OCI-LY7 (cell line): ENCODE measurements at regions of chr15 and their contacts with region 1.

Region 1: GRCh38 chr15:61871926-61872522 is 188.2 kb downstream of the VPS13C start:
- DNase-seq: peak; percentile 24
- H3K4me3 ChIP-seq: no peak overlapping the region
- H3K27ac ChIP-seq: no peak overlapping the region
- H3K4me1 ChIP-seq: no peaks in the 10 kb centered on the region
- CTCF ChIP-seq: peak; percentile 92

Region 2: GRCh38 chr15:61644550-61644949 is 227.5 kb before region 1 on chr15:
- CTCF ChIA-PET with region 1: no interaction called
- POLR2A ChIA-PET with region 1: no interaction called
- intact Hi-C with region 1: no loop called
- DNase-seq: no peak
- H3K4me3 ChIP-seq: no peak overlapping the region
- H3K27ac ChIP-seq: no peak overlapping the region
- H3K4me1 ChIP-seq: no peaks in the 10 kb centered on the region
- CTCF ChIP-seq: no peak

Region 3: GRCh38 chr15:61750381-61751084 is 121.5 kb before region 1 on chr15:
- CTCF ChIA-PET with region 1: no interaction called
- POLR2A ChIA-PET with region 1: no interaction called
- intact Hi-C with region 1: no loop called
- DNase-seq: no peak
- H3K4me3 ChIP-seq: no peak overlapping the region
- H3K27ac ChIP-seq: no peak overlapping the region
- H3K4me1 ChIP-seq: no peaks in the 10 kb centered on the region
- CTCF ChIP-seq: no peak

Region 4: DNA sequence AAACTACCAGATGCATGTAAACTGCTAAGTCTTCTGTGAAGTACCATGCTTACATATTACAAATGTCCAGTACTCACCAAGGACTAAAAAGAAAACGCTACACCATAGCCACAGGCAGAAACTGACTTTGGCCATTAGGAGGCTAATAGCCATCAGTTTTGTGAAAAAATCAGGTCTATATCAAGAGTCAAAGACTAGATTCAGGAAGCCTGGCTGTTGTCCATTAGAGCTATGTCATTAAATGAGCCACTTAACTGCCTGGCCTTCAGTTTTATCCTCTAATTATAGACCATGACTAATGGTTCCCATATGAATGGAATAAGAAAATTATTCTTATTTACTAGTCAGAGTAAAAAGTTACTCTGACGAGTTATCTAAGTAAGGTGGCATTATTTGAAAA is 44.1 kb after region 1 on chr15:
- CTCF ChIA-PET with region 1: no interaction called
- POLR2A ChIA-PET with region 1: no interaction called
- intact Hi-C with region 1: no loop called
- DNase-seq: no peak
- H3K4me3 ChIP-seq: no peak overlapping the region
- H3K27ac ChIP-seq: no peak overlapping the region
- H3K4me1 ChIP-seq: no peaks in the 10 kb centered on the region
- CTCF ChIP-seq: no peak

Region 5: GRCh38 chr15:62026487-62027262 is 154.7 kb after region 1 on chr15:
- CTCF ChIA-PET with region 1: no interaction called
- POLR2A ChIA-PET with region 1: no interaction called
- intact Hi-C with region 1: no loop called
- DNase-seq: peak; percentile 14
- H3K4me3 ChIP-seq: no peak overlapping the region
- H3K27ac ChIP-seq: peak overlapping the region; percentile 13
- H3K4me1 ChIP-seq: peaks cover 16% of the 10 kb centered on the region
- CTCF ChIP-seq: no peak

Region 6: GRCh38 chr15:62071711-62072308 is 199.8 kb after region 1 on chr15:
- CTCF ChIA-PET with region 1: interaction called, 3 read pairs
- POLR2A ChIA-PET with region 1: no interaction called
- intact Hi-C with region 1: loop called (anchors 2 kb)
- DNase-seq: peak; percentile 59
- H3K4me3 ChIP-seq: no peak overlapping the region
- H3K27ac ChIP-seq: no peak overlapping the region
- H3K4me1 ChIP-seq: peaks cover 5% of the 10 kb centered on the region
- CTCF ChIP-seq: peak; percentile 91

Region 7: DNA sequence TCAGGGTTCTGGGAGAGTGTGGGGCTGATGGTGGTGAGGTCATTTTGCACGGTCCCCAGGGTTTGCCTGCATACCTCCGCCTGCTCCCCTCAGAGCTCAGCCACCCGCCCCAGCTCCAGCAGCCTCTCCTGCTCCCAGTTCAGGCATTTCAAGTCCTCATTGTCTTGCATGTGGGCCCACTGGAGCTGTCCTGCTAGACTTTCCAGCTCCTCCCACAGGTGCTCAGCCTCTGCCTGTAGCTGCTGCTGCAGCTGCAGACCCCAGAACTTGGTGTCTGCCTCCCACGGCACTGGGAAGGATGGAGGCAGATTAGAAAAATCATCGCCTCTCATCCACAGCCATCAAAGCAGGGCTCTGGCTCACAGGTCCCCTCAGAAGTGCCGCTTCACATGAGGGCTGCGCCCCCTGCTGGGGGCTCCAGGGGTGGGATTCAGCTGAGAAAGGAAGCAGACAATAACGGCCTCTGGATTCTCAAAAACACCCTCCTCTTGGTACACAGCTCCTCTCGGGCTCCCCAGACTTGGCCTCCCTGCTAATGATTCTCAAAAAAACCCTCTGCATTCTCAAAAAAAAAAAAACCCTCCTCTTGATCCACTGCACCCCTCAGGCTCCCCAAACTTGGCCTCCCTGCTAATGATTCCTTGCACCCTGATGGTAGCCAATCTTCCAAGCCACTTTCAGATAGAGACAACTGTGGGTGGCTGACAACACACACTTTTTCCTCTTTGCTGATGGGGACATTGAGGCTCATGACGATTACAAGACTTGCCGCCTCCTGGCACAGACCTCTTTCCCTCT is 382.3 kb after region 1 on chr15:
- CTCF ChIA-PET with region 1: no interaction called
- POLR2A ChIA-PET with region 1: no interaction called
- intact Hi-C with region 1: loop called (anchors 10 kb)
- DNase-seq: peak; percentile 71
- H3K4me3 ChIP-seq: no peak overlapping the region
- H3K27ac ChIP-seq: no peak overlapping the region
- H3K4me1 ChIP-seq: no peaks in the 10 kb centered on the region
- CTCF ChIP-seq: peak; percentile 87